Mammary epithelial cell (primary cell): ENCODE measurements at regions of chr17 and their contacts with region 1.

Region 1: DNA sequence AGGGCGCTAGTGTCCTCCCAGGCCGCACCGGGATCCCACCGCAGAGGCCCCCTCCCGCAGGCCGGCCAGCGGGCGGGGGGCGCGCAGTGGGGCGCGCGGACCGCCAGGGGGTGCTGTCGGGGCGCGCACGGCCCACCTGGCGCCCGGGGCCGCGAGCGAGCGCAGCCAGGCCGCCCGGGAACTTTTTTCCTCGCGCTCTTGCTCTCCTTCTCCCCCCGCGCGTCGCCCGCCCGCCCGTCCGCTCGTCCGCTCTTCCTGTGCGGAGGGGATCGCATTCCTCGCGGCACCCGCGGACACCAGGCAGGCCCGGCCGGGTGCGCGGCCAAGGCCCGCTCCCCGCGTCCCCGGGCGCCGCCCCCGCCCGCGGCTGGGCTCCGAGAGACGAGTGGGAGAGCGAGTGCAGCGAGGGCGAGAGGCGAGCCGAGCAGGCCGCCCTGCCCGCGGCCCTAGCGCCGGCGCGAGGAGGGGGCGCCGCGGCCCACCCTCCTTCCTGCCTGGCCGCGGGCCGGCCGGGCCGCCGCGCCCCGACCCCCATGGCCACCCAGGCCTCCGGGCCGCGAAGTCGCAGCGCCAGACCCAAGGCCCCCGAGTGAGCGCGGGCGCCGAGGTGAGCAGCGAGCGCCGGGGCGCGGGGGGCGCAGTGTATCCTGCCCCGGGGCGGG is at the start of gene RAI1:
- DNase-seq: peak; percentile 71
- H3K4me3 ChIP-seq: peak within 1 kb of the TSS; percentile 72 to 84 (median 84)
- H3K27ac ChIP-seq: peak within 1 kb of the TSS; percentile 78
- H3K4me1 ChIP-seq: peaks cover 50% of the 10 kb centered on the region
- H3K27me3 ChIP-seq: no peaks in the 10 kb centered on the region
- CTCF ChIP-seq: peak; percentile 47 to 55
- total RNA-seq, gene RAI1: 23.8 to 41.9 TPM

Region 2: DNA sequence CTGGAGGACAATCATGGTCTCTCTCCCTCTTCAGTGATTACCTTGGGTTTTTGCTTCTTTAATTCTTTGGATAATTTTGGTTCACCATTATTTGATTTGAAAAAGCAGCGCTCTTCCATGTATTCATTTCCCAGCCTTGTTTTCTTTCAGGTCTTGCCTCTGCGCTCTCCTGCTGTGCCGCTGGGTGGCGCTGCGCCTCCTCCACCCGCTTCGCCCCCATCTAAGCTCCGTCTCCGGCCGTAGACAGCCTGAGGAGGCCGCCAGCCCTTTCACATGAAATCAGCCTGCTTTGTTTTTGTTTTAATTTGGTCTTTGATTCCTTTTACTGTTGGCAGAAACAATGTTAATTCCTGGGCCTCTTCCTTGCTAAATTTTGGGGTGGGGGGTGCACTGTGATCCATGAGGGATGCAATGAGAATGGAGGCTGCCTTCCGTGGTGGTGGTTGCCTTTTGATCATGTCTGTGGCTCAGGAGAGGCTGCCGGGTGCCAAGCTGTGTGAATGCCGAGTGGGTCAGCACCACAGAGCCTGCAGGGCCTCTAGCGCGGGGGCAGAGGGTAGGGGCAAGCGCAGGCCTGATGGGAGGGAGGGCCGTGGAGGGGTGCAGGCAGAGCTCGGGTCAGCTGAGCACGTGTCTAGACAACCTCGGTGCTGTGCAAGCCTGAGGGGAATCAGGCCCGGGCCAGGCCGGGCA is 539.3 kb before region 1 on chr17:
- CTCF ChIA-PET with region 1: no interaction called
- dilution Hi-C with region 1: no loop called
- in situ Hi-C with region 1: no loop called
- intact Hi-C with region 1: no loop called
- DNase-seq: peak; percentile 18
- H3K4me3 ChIP-seq: no peak overlapping the region
- H3K27ac ChIP-seq: no peak overlapping the region
- H3K4me1 ChIP-seq: peaks cover 35% of the 10 kb centered on the region
- H3K27me3 ChIP-seq: no peaks in the 10 kb centered on the region
- CTCF ChIP-seq: peak; percentile 98

Region 3: GRCh38 chr17:17403899-17404576 is 277.3 kb before region 1 on chr17:
- CTCF ChIA-PET with region 1: no interaction called
- dilution Hi-C with region 1: no loop called
- in situ Hi-C with region 1: no loop called
- intact Hi-C with region 1: no loop called
- DNase-seq: no peak
- H3K4me3 ChIP-seq: no peak overlapping the region
- H3K27ac ChIP-seq: no peak overlapping the region
- H3K4me1 ChIP-seq: peaks cover 10% of the 10 kb centered on the region
- H3K27me3 ChIP-seq: no peaks in the 10 kb centered on the region
- CTCF ChIP-seq: no peak

Region 4: GRCh38 chr17:17545031-17545820 is 136.1 kb before region 1 on chr17:
- CTCF ChIA-PET with region 1: no interaction called
- dilution Hi-C with region 1: no loop called
- in situ Hi-C with region 1: no loop called
- intact Hi-C with region 1: no loop called
- DNase-seq: peak; percentile 2
- H3K4me3 ChIP-seq: no peak overlapping the region
- H3K27ac ChIP-seq: no peak overlapping the region
- H3K4me1 ChIP-seq: peaks cover 8% of the 10 kb centered on the region
- H3K27me3 ChIP-seq: no peaks in the 10 kb centered on the region
- CTCF ChIP-seq: no peak

Region 5: DNA sequence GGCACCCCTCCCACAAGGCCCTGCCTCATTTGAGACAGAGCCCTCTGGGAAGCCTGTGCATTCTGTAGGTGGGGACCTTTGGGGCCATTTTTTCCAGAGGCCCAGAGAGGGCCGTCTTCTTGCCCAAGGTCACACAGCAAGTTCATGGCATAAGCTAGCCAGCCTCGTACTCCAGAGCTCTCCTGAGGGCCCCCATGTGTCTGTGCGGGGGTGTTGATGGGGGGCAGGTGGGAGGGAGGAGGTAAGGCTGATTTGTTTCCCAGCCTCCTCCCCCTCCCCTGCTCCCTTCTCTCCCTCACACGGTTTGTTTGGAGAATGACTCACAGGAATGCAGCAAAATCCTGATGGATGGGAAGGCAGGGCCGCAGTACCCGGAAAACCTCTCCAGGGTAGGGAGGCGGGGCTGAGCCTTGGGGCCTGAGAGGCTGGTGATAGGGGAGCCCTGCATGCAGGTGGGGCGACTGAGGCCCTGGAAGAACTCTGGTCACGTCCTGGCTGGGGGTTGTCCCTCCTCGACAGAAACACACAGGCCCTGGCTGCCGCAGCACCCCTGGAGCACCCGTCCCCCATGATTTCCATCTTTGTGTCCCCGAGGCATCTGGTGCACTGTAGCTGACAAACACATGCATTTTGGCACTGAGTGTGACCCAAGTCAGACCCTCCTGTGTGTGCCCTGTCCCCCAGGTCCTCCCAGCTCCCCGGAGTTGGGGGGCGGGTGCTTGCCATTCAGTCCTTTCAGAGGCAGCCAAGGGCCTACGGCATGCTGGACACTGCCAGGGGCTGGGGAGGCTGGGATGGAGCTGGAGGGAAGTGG is 29.6 kb after region 1 on chr17:
- CTCF ChIA-PET with region 1: no interaction called
- dilution Hi-C with region 1: no loop called
- in situ Hi-C with region 1: no loop called
- intact Hi-C with region 1: loop called (anchors 2 kb)
- DNase-seq: peak; percentile 86
- H3K4me3 ChIP-seq: peak overlapping the region in 1 of 3 experiments; percentile 4
- H3K27ac ChIP-seq: peak overlapping the region; percentile 38
- H3K4me1 ChIP-seq: peaks cover 47% of the 10 kb centered on the region
- H3K27me3 ChIP-seq: no peaks in the 10 kb centered on the region
- CTCF ChIP-seq: no peak

Region 6: GRCh38 chr17:17739388-17740066 is 58.2 kb after region 1 on chr17:
- CTCF ChIA-PET with region 1: no interaction called
- dilution Hi-C with region 1: no loop called
- in situ Hi-C with region 1: no loop called
- intact Hi-C with region 1: loop called (anchors 2 kb)
- DNase-seq: peak; percentile 42
- H3K4me3 ChIP-seq: no peak overlapping the region
- H3K27ac ChIP-seq: peak overlapping the region; percentile 80
- H3K4me1 ChIP-seq: peaks cover 55% of the 10 kb centered on the region
- H3K27me3 ChIP-seq: no peaks in the 10 kb centered on the region
- CTCF ChIP-seq: no peak

Region 7: DNA sequence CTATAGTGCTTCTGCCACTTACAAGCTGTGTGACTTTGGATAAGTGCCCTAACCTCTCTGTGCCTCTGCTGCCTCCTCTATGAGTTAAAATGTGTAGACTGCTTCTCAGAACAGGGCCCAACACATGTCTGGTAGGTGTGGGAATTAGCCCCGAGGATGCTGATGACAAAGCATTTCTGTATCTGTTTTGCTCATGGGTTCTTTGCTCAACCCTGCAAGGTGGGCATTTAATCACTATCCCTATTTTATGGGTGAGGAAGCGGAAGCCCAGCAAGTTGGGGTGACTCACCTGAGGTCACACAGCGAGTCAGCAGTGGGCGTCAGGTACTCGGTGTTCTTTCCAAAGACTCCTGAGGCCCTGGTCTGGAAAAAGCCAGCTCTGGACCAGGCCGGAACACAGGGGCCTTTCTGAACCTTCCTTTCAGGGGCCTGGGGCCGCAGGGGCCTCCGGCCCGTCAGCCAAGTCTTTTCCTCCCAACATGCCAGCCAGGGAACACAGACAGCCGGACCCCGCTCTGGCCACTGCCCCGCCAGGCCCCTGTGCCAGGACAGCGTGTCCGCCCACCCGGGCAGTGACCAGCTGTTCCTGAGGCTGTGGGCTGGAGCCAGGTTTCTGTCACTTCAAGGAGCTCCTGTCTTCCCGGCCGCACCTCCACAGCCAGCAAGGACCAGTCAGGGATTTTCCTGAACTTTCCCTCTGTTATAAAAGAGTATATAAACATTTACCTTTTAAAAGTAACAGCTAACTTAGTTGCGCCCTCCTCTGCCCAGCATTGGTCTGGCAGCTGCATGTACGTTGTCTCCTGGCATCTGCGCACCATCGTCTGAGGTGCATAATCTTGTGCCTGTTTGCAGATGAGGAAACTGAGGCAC is 92.9 kb after region 1 on chr17:
- CTCF ChIA-PET with region 1: no interaction called
- dilution Hi-C with region 1: no loop called
- in situ Hi-C with region 1: no loop called
- intact Hi-C with region 1: loop called (anchors 1 kb)
- DNase-seq: peak; percentile 97
- H3K4me3 ChIP-seq: peak overlapping the region in 1 of 3 experiments; percentile 19
- H3K27ac ChIP-seq: peak overlapping the region; percentile 98
- H3K4me1 ChIP-seq: peaks cover 23% of the 10 kb centered on the region
- H3K27me3 ChIP-seq: no peaks in the 10 kb centered on the region
- CTCF ChIP-seq: peak; percentile 67 to 77

Region 8: GRCh38 chr17:17859909-17860765 is 178.8 kb after region 1 on chr17:
- CTCF ChIA-PET with region 1: no interaction called
- dilution Hi-C with region 1: no loop called
- in situ Hi-C with region 1: no loop called
- intact Hi-C with region 1: loop called (anchors 1 kb)
- DNase-seq: peak; percentile 43
- H3K4me3 ChIP-seq: no peak overlapping the region
- H3K27ac ChIP-seq: no peak overlapping the region
- H3K4me1 ChIP-seq: peaks cover 21% of the 10 kb centered on the region
- H3K27me3 ChIP-seq: no peaks in the 10 kb centered on the region
- CTCF ChIP-seq: peak; percentile 94 to 98

Region 9: GRCh38 chr17:18033442-18034099 is 352.3 kb after region 1 on chr17:
- CTCF ChIA-PET with region 1: interaction called, 17 read pairs
- dilution Hi-C with region 1: no loop called
- in situ Hi-C with region 1: loop called in 1 of 2 experiments (anchors 25 kb)
- intact Hi-C with region 1: loop called (anchors 1 kb)
- DNase-seq: peak; percentile 74
- H3K4me3 ChIP-seq: no peak overlapping the region
- H3K27ac ChIP-seq: no peak overlapping the region
- H3K4me1 ChIP-seq: peaks cover 25% of the 10 kb centered on the region
- H3K27me3 ChIP-seq: no peaks in the 10 kb centered on the region
- CTCF ChIP-seq: peak; percentile 55 to 60